ENCODE measurements at regions of chr1 and their contacts with region 1.

Region 1: GRCh38 chr1:188372832-188373231 is 1544.1 kb downstream of the PLA2G4A start:
- DNase-seq: no peak
- ATAC-seq: no peak
- H3K4me3 Mint-ChIP-seq: no peak overlapping the region
- H3K27ac Mint-ChIP-seq: no peak overlapping the region
- H3K4me1 Mint-ChIP-seq: no peaks in the 10 kb centered on the region
- H3K27me3 Mint-ChIP-seq: no peaks in the 10 kb centered on the region

Region 2: GRCh38 chr1:188463913-188464312 is 91.1 kb after region 1 on chr1:
- CTCF ChIA-PET with region 1: no interaction called
- POLR2A ChIA-PET with region 1: no interaction called
- intact Hi-C with region 1: loop called in 1 of 2 experiments (anchors 10 kb)
- DNase-seq: no peak
- ATAC-seq: no peak
- H3K4me3 Mint-ChIP-seq: no peak overlapping the region
- H3K27ac Mint-ChIP-seq: no peak overlapping the region
- H3K4me1 Mint-ChIP-seq: no peaks in the 10 kb centered on the region
- H3K27me3 Mint-ChIP-seq: no peaks in the 10 kb centered on the region

Measured in activated CD4-positive, alpha-beta T cell treated with anti-CD3 and anti-CD28 coated beads for 36 hours (primary cell).